Panc1 (cell line): ENCODE measurements at regions of chr16 and their contacts with region 1.

Region 1: GRCh38 chr16:57795431-57795878 is 6.8 kb downstream of the KIFC3 start:
- DNase-seq: peak; percentile 27
- ATAC-seq: peak; percentile 85
- H3K4me3 ChIP-seq: no peak overlapping the region
- H3K27ac ChIP-seq: no peak overlapping the region
- H3K4me1 ChIP-seq: peaks cover 8% of the 10 kb centered on the region
- H3K27me3 ChIP-seq: no peaks in the 10 kb centered on the region
- CTCF ChIP-seq: peak; percentile 75; the same call in 1 of the 2 replicates

Region 2: GRCh38 chr16:57871456-57871855 is 76.0 kb after region 1 on chr16:
- CTCF ChIA-PET with region 1: no interaction called
- POLR2A ChIA-PET with region 1: interaction called, 15 read pairs
- in situ Hi-C with region 1: no loop called
- intact Hi-C with region 1: no loop called
- DNase-seq: no peak
- ATAC-seq: no peak
- H3K4me3 ChIP-seq: no peak overlapping the region
- H3K27ac ChIP-seq: no peak overlapping the region
- H3K4me1 ChIP-seq: no peaks in the 10 kb centered on the region
- H3K27me3 ChIP-seq: no peaks in the 10 kb centered on the region
- CTCF ChIP-seq: no peak